ENCODE measurements at regions of chr17 and their contacts with region 1.

Region 1: GRCh38 chr17:1186923-1187771 is 7.4 kb upstream of the ABR start:
- DNase-seq: peak; percentile 77
- ATAC-seq: peak; percentile 89
- H3K4me3 Mint-ChIP-seq: no peak overlapping the region
- H3K27ac Mint-ChIP-seq: no peak overlapping the region
- H3K4me1 Mint-ChIP-seq: peaks cover 10% of the 10 kb centered on the region
- H3K27me3 Mint-ChIP-seq: no peaks in the 10 kb centered on the region
- CTCF ChIP-seq: peak; percentile 86

Region 2: DNA sequence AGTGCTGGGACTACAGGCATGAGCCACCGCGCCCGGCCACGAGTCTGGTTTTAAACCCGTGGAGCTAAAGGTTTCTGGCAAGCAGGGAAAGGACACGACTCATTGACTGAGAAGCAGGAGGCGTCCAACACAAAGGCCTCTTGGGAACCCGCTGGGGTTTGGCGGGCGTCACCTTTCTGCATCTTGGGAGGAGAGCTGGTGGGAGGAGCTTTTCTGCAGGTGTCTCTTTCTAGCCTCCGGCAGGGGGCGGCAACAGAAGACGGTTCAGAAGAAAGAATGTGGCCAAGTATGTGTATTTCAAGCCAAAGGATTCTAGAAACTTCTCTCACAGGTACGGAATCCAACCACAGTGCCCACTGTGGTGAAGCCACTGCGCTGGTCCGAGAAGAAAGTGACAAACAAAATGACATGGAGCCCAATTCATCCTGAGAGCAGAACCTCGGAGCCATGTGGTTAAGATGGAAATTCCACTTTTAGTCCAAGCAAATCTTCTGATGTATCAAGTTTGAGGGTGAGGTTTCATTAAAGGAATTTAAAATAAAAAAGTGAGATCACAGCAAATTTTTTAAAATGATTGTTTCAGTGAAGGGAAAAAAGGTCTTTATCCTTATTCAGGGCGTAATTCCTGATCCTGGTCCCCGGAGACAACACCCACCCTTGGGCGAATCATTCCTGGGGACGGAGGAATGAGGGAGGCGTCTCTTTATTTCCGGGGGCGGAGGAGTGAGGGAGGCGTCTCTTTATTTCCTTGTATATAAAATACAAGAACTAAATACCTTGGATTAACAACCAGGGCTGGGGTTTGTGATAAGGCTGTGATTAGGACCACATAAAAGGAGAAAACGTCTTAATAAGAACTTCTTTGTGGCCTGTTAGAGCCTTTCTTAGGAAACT is 307.4 kb before region 1 on chr17:
- CTCF ChIA-PET with region 1: no interaction called
- POLR2A ChIA-PET with region 1: no interaction called
- intact Hi-C with region 1: no loop called
- DNase-seq: peak; percentile 79
- ATAC-seq: peak; percentile 74
- H3K4me3 Mint-ChIP-seq: no peak overlapping the region
- H3K27ac Mint-ChIP-seq: no peak overlapping the region
- H3K4me1 Mint-ChIP-seq: peaks cover 11% of the 10 kb centered on the region
- H3K27me3 Mint-ChIP-seq: peaks cover 18% of the 10 kb centered on the region
- CTCF ChIP-seq: peak; percentile 55

Region 3: DNA sequence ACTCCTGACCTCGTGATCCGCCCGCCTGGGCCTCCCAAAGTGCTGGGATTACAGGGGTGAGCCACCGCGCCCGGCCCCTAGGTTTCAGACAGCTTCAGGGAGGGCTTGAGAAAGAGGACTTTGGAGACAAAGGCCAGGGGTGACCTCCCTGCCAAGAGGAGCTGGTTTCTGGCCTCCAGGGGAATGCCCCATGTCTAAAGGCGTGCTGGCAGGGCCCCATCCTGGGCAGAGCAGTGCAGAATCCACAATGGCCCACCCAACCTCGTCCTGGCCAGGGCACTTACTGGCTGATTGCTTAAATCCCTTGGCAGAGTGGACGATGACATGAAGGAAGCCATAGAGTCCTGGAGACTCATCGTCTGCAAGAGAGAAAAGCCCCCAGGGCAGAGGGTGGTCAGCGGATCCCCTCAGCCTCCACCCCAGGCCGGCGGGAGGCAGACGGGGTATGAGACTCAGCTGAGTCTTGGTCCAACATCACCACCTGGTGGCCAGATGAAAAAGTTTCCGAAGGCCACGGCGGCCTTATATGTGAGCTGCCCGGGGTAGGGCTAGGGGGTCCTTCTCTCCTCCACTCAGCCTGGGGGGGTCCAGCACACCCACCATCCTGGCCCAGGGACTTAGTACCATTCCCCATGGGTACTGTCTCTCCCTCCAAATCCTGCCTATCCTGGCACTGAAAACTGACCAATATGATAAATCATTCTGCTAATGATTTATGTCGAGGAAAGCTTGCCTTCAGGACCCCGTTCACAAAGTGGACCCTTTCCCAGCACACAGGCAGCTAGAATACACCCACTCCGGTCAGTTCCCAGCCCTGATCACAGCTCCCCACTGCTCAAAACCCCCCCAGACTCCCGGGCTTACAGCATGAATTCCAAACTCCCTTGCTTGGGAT is 131.1 kb before region 1 on chr17:
- CTCF ChIA-PET with region 1: interaction called, 10 read pairs
- POLR2A ChIA-PET with region 1: no interaction called
- intact Hi-C with region 1: no loop called
- DNase-seq: peak; percentile 69
- ATAC-seq: peak; percentile 77
- H3K4me3 Mint-ChIP-seq: no peak overlapping the region
- H3K27ac Mint-ChIP-seq: no peak overlapping the region
- H3K4me1 Mint-ChIP-seq: peaks cover 2% of the 10 kb centered on the region
- H3K27me3 Mint-ChIP-seq: no peaks in the 10 kb centered on the region
- CTCF ChIP-seq: peak; percentile 76

Region 4: DNA sequence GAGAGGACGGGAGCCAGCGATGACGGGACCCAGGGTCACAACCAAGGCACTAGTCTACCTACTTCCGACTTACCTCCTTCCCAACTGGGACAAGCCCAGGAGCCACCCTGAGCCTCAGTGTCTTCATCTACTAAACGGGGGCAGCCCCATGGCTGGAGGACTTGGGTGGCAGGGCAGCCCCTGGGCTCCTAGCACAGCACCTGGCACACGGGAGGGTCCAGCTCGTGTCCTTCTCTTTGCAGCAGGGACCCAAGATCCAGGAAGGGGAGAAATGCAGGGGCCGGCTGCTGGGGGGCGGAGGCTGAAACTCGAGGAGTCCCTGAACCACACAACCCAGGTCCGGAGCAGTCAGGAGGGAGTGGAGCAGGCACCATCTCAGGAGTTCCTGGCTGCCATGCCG is 70.5 kb before region 1 on chr17:
- CTCF ChIA-PET with region 1: interaction called, 142 read pairs
- POLR2A ChIA-PET with region 1: no interaction called
- intact Hi-C with region 1: loop called (anchors 5 kb)
- DNase-seq: no peak
- ATAC-seq: no peak
- H3K4me3 Mint-ChIP-seq: no peak overlapping the region
- H3K27ac Mint-ChIP-seq: no peak overlapping the region
- H3K4me1 Mint-ChIP-seq: peaks cover 22% of the 10 kb centered on the region
- H3K27me3 Mint-ChIP-seq: no peaks in the 10 kb centered on the region
- CTCF ChIP-seq: no peak

Region 5: DNA sequence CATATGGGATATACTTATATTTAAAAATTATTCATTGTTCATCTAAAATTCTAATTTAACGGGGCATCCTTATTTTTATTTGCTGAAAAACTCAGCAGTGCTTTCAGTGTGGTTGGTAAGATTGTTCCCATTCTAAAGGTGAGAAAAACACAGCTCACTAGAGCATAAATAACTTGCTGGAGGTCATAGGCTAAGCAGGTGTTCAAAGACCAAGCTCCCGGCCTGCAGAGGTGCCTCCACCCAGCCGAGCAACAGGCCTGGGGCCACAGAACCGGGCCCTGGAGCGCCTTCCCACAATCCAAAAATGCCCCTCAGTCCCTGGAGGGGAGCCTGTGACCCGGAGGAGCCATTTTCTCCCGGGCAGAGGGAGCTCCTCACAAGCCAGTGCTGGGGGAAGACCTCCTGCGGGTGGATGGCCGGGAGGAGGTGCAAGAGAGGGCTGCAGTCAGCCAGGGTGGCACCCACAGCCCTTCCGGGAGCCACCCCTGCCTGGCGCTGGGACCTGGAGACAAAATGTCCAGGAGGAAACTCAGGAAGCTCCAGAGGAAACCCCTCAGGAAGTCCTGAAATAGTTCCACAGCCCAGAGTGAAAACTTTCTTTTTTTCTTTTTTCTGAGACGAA is 22.1 kb before region 1 on chr17:
- CTCF ChIA-PET with region 1: interaction called, 11 read pairs
- POLR2A ChIA-PET with region 1: no interaction called
- intact Hi-C with region 1: no loop called
- DNase-seq: no peak
- ATAC-seq: no peak
- H3K4me3 Mint-ChIP-seq: no peak overlapping the region
- H3K27ac Mint-ChIP-seq: no peak overlapping the region
- H3K4me1 Mint-ChIP-seq: peaks cover 4% of the 10 kb centered on the region
- H3K27me3 Mint-ChIP-seq: no peaks in the 10 kb centered on the region
- CTCF ChIP-seq: no peak

Region 6: GRCh38 chr17:1197781-1198490 is 10.8 kb after region 1 on chr17:
- CTCF ChIA-PET with region 1: interaction called, 42 read pairs
- POLR2A ChIA-PET with region 1: interaction called, 6 read pairs
- intact Hi-C with region 1: no loop called
- DNase-seq: peak; percentile 86
- ATAC-seq: peak; percentile 58
- H3K4me3 Mint-ChIP-seq: peak overlapping the region; percentile 35
- H3K27ac Mint-ChIP-seq: peak overlapping the region; percentile 88
- H3K4me1 Mint-ChIP-seq: peaks cover 50% of the 10 kb centered on the region
- H3K27me3 Mint-ChIP-seq: no peaks in the 10 kb centered on the region
- CTCF ChIP-seq: no peak

Region 7: GRCh38 chr17:1203111-1203966 is 16.2 kb after region 1 on chr17:
- CTCF ChIA-PET with region 1: interaction called, 42 read pairs
- POLR2A ChIA-PET with region 1: interaction called, 6 read pairs
- intact Hi-C with region 1: no loop called
- DNase-seq: peak; percentile 59
- ATAC-seq: peak; percentile 45
- H3K4me3 Mint-ChIP-seq: no peak overlapping the region
- H3K27ac Mint-ChIP-seq: no peak overlapping the region
- H3K4me1 Mint-ChIP-seq: peaks cover 33% of the 10 kb centered on the region
- H3K27me3 Mint-ChIP-seq: no peaks in the 10 kb centered on the region
- CTCF ChIP-seq: no peak

Measured in activated CD8-positive, alpha-beta T cell treated with anti-CD3 and anti-CD28 coated beads for 36 hours (primary cell).